A673 (cell line): ENCODE measurements at regions of chr16 and their contacts with region 1.

Region 1: DNA sequence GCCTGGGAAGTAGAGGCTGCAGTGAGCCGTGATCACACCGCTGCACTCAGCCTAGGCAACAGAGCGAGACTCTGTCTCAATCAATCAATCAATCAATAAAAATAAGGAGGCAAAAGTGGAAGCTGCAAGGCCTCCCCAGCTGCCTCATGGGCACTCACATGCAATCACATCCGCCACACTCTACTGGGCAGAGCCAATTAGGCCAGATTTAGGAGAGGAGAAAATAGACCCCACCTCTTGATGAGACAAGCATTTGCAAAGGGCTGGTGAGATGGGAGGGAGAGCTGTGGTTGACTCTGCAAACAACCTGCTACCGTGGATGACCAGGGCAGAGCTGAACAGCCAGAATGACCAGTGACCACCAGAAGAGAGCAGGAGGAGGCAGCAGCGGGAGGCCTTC is 14.7 kb upstream of the GSG1L start:
- DNase-seq: no peak
- H3K4me3 ChIP-seq: no peak overlapping the region
- H3K27ac ChIP-seq: no peak overlapping the region
- H3K4me1 ChIP-seq: no peaks in the 10 kb centered on the region
- H3K27me3 ChIP-seq: no peaks in the 10 kb centered on the region
- CTCF ChIP-seq: no peak

Region 2: GRCh38 chr16:27795992-27796614 is 282.2 kb before region 1 on chr16:
- CTCF ChIA-PET with region 1: no interaction called
- POLR2A ChIA-PET with region 1: no interaction called
- intact Hi-C with region 1: no loop called
- DNase-seq: peak; percentile 49
- H3K4me3 ChIP-seq: no peak overlapping the region
- H3K27ac ChIP-seq: no peak overlapping the region
- H3K4me1 ChIP-seq: no peaks in the 10 kb centered on the region
- H3K27me3 ChIP-seq: peaks cover 13% of the 10 kb centered on the region
- CTCF ChIP-seq: no peak

Region 3: GRCh38 chr16:27999687-28000086 is 78.6 kb before region 1 on chr16:
- CTCF ChIA-PET with region 1: no interaction called
- POLR2A ChIA-PET with region 1: no interaction called
- intact Hi-C with region 1: no loop called
- DNase-seq: no peak
- H3K4me3 ChIP-seq: no peak overlapping the region
- H3K27ac ChIP-seq: no peak overlapping the region
- H3K4me1 ChIP-seq: no peaks in the 10 kb centered on the region
- H3K27me3 ChIP-seq: no peaks in the 10 kb centered on the region
- CTCF ChIP-seq: no peak

Region 4: DNA sequence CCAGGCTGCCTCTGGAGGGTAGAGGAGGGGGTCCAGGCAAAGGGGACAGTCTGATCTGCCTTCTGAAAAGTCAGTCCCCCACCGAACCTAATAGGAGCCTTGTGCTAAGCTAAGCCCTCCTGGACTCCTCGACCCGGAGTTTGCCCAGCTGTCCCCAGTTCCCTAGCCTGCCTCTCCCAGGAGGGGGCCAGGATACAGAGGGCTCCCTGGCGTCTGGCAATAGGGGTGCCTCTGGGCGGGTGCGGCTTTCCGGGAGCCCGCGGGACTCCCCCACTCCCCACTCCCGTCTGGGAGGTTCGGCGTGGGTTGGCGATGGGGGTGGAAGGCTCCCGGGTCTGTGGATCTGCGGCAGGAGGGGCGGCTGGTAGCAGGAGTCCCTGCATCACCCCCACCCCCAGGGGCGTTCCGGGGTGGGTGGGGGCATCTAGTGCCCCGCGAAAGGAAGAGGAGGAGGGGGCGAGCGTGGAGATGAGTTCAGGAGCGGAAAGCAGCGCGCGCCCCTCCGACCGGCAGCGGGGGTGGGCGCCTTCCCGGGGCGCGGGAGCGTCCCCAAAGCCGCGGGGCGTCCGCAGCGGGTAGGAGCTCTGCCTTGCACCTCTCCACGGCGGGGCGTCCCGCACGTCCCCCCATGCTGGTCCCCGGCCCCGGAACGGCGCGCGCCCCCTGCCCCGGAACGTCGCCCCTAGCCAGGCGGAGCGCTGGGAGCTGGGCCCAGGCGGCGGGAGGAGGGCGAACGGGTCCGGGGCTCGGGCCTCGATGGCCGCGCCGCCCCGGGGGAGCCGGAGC is 15.8 kb before region 1 on chr16:
- CTCF ChIA-PET with region 1: interaction called, 23 read pairs
- POLR2A ChIA-PET with region 1: no interaction called
- intact Hi-C with region 1: no loop called
- DNase-seq: no peak
- H3K4me3 ChIP-seq: peak overlapping the region; percentile 33
- H3K27ac ChIP-seq: no peak overlapping the region
- H3K4me1 ChIP-seq: no peaks in the 10 kb centered on the region
- H3K27me3 ChIP-seq: peaks cover 62% of the 10 kb centered on the region
- CTCF ChIP-seq: no peak

Region 5: GRCh38 chr16:28193530-28194423 is 115.5 kb after region 1 on chr16:
- CTCF ChIA-PET with region 1: no interaction called
- POLR2A ChIA-PET with region 1: no interaction called
- intact Hi-C with region 1: no loop called
- DNase-seq: peak; percentile 67
- H3K4me3 ChIP-seq: peak overlapping the region; percentile 5
- H3K27ac ChIP-seq: peak overlapping the region; percentile 77
- H3K4me1 ChIP-seq: peaks cover 53% of the 10 kb centered on the region
- H3K27me3 ChIP-seq: no peaks in the 10 kb centered on the region
- CTCF ChIP-seq: no peak